Heart left ventricle (tissue), 16 donors: ENCODE measurements at regions of chr4 and their contacts with region 1.

Region 1: DNA sequence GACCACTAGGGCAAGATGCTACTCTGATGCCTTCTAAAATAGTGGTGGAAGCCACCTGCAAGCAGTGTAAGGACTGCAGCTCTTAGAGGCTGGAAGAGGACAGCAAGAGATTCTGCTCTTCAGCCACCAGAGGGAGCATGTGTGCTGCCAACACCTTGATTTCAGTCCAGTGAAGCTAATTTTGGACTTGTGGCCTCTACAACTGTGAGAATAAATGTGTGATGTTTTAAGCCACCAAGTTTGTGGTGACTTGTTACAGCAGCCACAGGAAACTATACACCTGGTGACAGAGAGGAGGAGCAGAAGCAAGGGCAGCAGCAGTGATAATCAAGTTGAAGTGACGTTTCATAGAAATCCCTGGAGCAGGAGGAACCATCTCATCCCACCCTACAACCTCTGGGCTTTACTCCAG is 55.9 kb downstream of the FGFBP1 start:
- DNase-seq: peak in 4 of 5 donors; percentile 39 to 53 (median 42)
- ATAC-seq: peak; percentile 73 to 89 (median 85)
- H3K4me3 ChIP-seq: no peak overlapping the region
- H3K27ac ChIP-seq: no peak overlapping the region
- H3K4me1 ChIP-seq: peaks cover 0 to 3% (median 0%) of the 10 kb centered on the region in 12 donors
- H3K27me3 ChIP-seq: no peaks in the 10 kb centered on the region
- CTCF ChIP-seq: peak; percentile 74 to 92 (median 88)
- POLR2A ChIP-seq: no peak

Region 2: DNA sequence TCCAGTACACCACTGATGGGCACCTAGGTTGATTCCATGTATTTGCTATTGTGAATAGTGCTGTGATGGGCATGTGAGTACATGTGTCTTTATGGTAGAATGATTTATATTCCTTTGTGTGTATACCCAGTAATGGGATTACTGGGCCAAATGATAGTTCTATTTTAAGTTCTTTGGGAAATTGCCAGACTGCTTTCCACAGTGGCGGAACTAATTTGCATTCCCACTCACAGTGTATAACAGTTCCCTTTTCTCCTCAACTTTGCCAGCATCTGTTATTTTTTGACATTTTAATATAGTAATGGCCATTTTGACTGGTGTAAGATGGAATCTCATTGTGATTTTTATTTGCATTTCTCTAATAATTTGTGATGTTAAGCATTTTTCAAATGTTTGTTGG is 387.1 kb before region 1 on chr4:
- intact Hi-C with region 1: no loop called
- DNase-seq: no peak
- ATAC-seq: peak in 2 of 4 donors; percentile 52 to 60
- H3K4me3 ChIP-seq: no peak overlapping the region
- H3K27ac ChIP-seq: no peak overlapping the region
- H3K4me1 ChIP-seq: peaks cover 0 to 22% (median 12%) of the 10 kb centered on the region in 12 donors
- H3K27me3 ChIP-seq: no peaks in the 10 kb centered on the region
- CTCF ChIP-seq: no peak
- POLR2A ChIP-seq: no peak

Region 3: DNA sequence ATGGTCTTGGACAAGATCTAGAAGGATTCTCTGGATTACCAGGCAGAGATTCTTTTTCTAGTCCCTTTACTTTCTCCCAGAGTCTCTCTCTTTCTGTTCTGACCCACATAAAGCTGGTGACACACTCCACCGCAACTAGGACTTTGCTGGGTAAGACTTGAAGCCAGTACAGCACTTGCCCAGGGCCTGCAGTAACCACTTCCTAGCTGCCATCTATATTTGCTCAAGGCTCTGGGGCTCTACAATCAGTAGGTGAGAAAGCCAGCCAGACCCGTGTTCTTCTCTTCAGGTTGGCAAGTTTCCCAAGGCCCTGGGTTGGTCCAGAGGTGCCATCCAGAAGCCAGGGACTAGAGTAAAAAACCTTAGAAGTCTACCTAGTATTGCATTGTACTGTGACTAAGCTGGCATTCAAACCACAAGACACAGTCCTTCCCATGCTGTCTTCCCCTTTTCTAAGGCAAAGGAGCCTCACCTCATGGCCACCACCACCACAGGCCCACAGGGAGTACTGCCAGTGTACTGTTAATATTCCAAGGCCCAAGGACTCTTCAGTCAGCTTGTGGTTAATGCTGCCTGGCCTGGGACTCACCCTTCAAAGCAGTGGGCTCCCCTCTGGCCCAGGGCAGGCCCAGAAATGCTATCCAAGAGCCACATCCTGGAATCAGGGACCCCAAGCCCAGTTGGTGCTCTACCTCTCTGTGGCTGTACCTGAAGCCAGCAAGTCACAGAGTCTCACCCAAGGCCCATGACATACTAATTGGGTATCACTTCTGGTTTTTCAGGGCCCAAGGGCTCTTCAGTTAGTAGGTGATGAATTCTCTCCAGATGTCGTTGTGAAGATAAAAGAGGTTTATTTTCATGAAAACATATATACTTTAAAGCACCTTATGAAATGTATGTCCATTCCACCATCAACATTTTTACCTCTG is 49.9 kb before region 1 on chr4:
- intact Hi-C with region 1: no loop called
- DNase-seq: no peak
- ATAC-seq: no peak
- H3K4me3 ChIP-seq: no peak overlapping the region
- H3K27ac ChIP-seq: peak overlapping the region in 3 of 12 donors; percentile 3 to 45 (median 26)
- H3K4me1 ChIP-seq: peaks cover 0 to 6% (median 0%) of the 10 kb centered on the region in 12 donors
- H3K27me3 ChIP-seq: no peaks in the 10 kb centered on the region
- CTCF ChIP-seq: no peak
- POLR2A ChIP-seq: no peak

Region 4: DNA sequence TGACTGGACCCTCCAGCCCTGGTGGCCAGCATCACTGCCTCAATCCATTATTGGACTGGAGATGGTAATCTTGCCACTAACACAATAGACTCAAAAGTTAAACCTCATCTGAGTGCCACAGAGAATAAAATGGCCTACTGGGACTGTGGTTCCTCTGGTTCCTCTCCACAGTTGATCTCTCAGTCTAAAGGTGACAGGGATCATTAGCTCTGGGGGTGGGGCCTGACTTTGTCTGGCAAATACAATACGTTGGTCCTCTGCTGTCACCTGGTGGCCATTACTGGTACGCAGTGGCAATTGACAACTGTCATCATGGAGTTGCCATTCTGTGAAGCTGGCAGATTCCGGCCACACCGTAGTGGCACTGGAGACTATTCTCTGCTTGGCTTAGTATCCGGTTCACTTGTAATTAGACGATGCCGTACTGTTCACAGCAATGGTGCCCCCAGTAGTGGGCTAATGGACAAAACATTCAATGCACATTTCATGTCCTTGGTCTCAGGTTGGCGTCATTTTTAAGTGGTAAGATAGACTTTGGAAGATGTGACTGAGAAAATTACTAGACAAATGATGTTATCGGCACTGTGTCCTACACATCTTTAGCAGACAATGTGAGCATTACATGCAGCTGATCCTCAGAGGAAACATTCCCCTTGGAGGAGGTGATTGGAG is 73.6 kb after region 1 on chr4:
- intact Hi-C with region 1: loop called (anchors 1 to 5 kb)
- DNase-seq: peak; percentile 60 to 83 (median 72)
- ATAC-seq: peak in 3 of 4 donors; percentile 85 to 92 (median 86)
- H3K4me3 ChIP-seq: no peak overlapping the region
- H3K27ac ChIP-seq: no peak overlapping the region
- H3K4me1 ChIP-seq: peaks cover 0 to 4% (median 0%) of the 10 kb centered on the region in 12 donors
- H3K27me3 ChIP-seq: no peaks in the 10 kb centered on the region
- CTCF ChIP-seq: peak; percentile 82 to 93 (median 86)
- POLR2A ChIP-seq: no peak

Region 5: DNA sequence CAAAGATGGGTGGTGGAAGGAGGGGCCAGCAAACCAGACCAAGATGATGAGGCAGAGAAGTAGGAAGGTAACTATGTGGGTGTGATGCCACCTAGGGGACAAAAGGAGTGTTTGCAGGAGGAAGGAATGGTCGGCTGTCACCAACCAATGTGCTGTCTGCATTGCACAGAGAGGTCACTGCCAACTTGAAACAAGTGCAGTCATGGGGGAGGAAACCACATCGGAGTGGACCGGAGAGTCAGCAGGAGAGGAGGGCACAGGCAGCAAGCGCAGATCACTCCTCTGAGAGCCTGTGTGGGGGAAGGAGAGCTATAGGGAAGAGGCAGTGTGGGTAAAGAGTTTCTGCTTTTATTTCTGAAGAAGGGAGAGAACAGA is 118.8 kb after region 1 on chr4:
- intact Hi-C with region 1: loop called (anchors 1 to 5 kb)
- DNase-seq: peak in 4 of 5 donors; percentile 45 to 64 (median 60)
- ATAC-seq: peak; percentile 70 to 97 (median 92)
- H3K4me3 ChIP-seq: no peak overlapping the region
- H3K27ac ChIP-seq: no peak overlapping the region
- H3K4me1 ChIP-seq: peaks cover 0 to 13% (median 0%) of the 10 kb centered on the region in 12 donors
- H3K27me3 ChIP-seq: no peaks in the 10 kb centered on the region
- CTCF ChIP-seq: peak; percentile 75 to 89 (median 82)
- POLR2A ChIP-seq: no peak